Activated naive CD4-positive, alpha-beta T cell treated with anti-CD3 and anti-CD28 coated beads for 36 hours (primary cell): ENCODE measurements at regions of chr1 and their contacts with region 1.

Region 1: GRCh38 chr1:27300341-27301051 is 21.5 kb upstream of the TMEM222 start:
- DNase-seq: peak; percentile 84
- H3K4me3 Mint-ChIP-seq: no peak overlapping the region
- H3K27ac Mint-ChIP-seq: no peak overlapping the region
- H3K4me1 Mint-ChIP-seq: no peaks in the 10 kb centered on the region
- H3K27me3 Mint-ChIP-seq: no peaks in the 10 kb centered on the region

Region 2: GRCh38 chr1:27192039-27192529 is 108.4 kb before region 1 on chr1:
- CTCF ChIA-PET with region 1: interaction called, 13 read pairs
- intact Hi-C with region 1: no loop called
- DNase-seq: no peak
- H3K4me3 Mint-ChIP-seq: no peak overlapping the region
- H3K27ac Mint-ChIP-seq: no peak overlapping the region
- H3K4me1 Mint-ChIP-seq: no peaks in the 10 kb centered on the region
- H3K27me3 Mint-ChIP-seq: no peaks in the 10 kb centered on the region

Region 3: GRCh38 chr1:27267153-27267552 is 33.3 kb before region 1 on chr1:
- CTCF ChIA-PET with region 1: interaction called, 11 read pairs
- intact Hi-C with region 1: no loop called
- DNase-seq: no peak
- H3K4me3 Mint-ChIP-seq: no peak overlapping the region
- H3K27ac Mint-ChIP-seq: no peak overlapping the region
- H3K4me1 Mint-ChIP-seq: peaks cover 3% of the 10 kb centered on the region
- H3K27me3 Mint-ChIP-seq: no peaks in the 10 kb centered on the region

Region 4: DNA sequence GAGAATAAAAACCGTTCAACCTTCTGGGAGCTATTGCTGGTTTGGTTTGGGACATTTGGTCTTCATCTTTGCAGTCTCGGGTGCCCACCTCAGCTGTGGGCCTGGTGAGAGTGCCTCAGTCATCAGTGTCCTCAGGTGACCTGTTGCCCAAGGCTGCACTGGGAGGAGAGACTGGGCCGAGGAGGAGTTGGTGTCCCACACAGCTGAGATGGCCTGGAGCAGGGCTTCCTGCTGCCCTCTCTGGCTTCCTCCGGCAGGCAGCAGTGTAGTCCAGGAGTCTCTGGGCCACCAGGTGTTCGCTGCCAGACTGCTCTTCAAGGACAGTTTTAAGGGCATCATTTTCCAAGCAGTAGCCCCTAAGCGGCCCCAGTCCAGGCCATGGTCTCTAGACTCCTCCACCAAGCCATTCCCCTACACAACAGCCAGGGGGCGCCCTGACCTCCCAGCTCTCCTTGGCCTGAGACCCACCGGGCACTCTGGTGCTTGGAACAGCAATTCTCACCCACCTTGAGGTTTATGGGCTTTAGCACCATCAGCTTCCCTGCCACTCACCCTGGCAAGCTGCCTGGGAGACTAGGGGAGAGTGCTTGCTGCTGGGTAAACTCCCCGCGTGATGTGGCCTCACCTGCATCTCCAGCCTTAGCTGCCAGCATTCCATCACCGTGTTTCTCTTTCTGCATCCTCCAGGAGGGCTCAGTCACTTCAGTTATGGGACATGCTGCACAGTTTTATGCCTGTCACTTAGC is 32.2 kb after region 1 on chr1:
- CTCF ChIA-PET with region 1: interaction called, 11 read pairs
- intact Hi-C with region 1: no loop called
- DNase-seq: peak; percentile 68
- H3K4me3 Mint-ChIP-seq: no peak overlapping the region
- H3K27ac Mint-ChIP-seq: no peak overlapping the region
- H3K4me1 Mint-ChIP-seq: peaks cover 26% of the 10 kb centered on the region
- H3K27me3 Mint-ChIP-seq: no peaks in the 10 kb centered on the region

Region 5: GRCh38 chr1:27357281-27358037 is 57.0 kb after region 1 on chr1:
- CTCF ChIA-PET with region 1: interaction called, 11 read pairs
- intact Hi-C with region 1: no loop called
- DNase-seq: peak; percentile 86
- H3K4me3 Mint-ChIP-seq: peak overlapping the region; percentile 70
- H3K27ac Mint-ChIP-seq: peak overlapping the region; percentile 78
- H3K4me1 Mint-ChIP-seq: peaks cover 38% of the 10 kb centered on the region
- H3K27me3 Mint-ChIP-seq: no peaks in the 10 kb centered on the region

Region 6: DNA sequence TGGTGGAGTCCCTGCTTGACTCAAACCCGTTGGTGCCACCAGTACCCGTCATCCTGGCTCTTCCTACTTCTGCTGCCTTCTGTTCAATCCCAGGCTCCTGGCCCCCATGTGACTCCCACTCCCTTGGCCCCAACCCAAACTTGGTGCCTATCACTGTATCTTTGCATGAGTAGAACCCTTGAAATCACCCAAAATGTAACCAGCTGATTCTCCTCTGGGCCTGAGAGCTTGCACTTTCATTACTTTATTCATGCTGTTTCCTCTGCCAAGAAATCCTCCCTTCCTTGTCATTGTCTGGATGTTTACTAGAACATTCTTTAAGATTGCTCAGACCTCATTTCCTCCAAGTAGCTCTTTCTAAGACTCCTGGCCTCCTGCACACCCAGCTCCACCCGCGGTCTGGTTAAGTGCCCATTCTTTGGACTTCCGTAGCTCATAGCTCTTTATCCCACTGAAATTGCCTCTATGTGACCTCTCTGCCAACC is 860.3 kb after region 1 on chr1:
- CTCF ChIA-PET with region 1: no interaction called
- intact Hi-C with region 1: no loop called
- DNase-seq: no peak
- H3K4me3 Mint-ChIP-seq: no peak overlapping the region
- H3K27ac Mint-ChIP-seq: no peak overlapping the region
- H3K4me1 Mint-ChIP-seq: no peaks in the 10 kb centered on the region
- H3K27me3 Mint-ChIP-seq: peaks cover 12% of the 10 kb centered on the region